ENCODE measurements at regions of chr6 and their contacts with region 1.

Region 1: GRCh38 chr6:127938701-127939100 is 37.8 kb upstream of the THEMIS start:
- DNase-seq: no peak
- H3K4me3 Mint-ChIP-seq: no peak overlapping the region
- H3K27ac Mint-ChIP-seq: peak overlapping the region; percentile 31
- H3K4me1 Mint-ChIP-seq: peaks cover 38% of the 10 kb centered on the region
- H3K27me3 Mint-ChIP-seq: no peaks in the 10 kb centered on the region

Region 2: DNA sequence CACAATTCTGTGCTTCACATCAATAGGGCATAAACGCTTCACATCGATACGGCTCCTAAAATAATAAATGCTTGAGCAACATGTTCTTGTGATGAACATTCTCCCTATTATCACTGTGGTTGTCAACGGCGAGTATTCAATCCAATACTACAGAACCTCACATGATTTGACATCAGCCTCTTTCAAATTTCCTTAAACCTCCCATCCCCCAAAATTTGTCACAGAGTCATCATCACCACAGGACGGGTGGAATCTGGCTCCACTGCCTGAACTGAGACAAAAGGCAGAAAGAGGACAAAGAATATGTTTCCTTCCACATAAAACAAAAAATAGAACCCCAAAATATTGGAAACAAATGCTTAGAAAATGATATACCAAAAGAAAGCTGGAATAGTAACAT is 45.2 kb before region 1 on chr6:
- intact Hi-C with region 1: loop called (anchors 1 kb)
- DNase-seq: no peak
- H3K4me3 Mint-ChIP-seq: peak overlapping the region; percentile 60
- H3K27ac Mint-ChIP-seq: peak overlapping the region; percentile 69
- H3K4me1 Mint-ChIP-seq: peaks cover 45% of the 10 kb centered on the region
- H3K27me3 Mint-ChIP-seq: no peaks in the 10 kb centered on the region

Region 3: DNA sequence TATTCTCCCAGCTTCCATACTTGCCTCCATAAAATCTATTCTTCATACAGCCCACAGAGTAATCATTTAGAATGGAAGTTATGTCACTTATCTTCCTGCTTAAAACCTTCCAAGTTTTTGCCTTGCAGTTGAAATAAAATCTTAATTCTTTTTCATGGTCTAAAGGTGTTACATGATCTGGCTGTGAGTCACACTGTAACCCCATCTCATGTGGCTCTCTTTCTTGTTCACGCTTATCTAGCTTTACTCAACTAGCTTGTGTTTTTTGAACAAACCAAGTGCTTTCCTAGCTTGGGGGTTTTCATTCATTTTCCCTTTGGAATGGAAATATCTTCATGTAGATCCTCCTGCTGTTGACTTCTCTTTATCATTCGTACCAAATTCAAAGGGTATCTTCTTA is 14.3 kb before region 1 on chr6:
- intact Hi-C with region 1: loop called (anchors 1 kb)
- DNase-seq: no peak
- H3K4me3 Mint-ChIP-seq: no peak overlapping the region
- H3K27ac Mint-ChIP-seq: no peak overlapping the region
- H3K4me1 Mint-ChIP-seq: peaks cover 44% of the 10 kb centered on the region
- H3K27me3 Mint-ChIP-seq: no peaks in the 10 kb centered on the region

Region 4: DNA sequence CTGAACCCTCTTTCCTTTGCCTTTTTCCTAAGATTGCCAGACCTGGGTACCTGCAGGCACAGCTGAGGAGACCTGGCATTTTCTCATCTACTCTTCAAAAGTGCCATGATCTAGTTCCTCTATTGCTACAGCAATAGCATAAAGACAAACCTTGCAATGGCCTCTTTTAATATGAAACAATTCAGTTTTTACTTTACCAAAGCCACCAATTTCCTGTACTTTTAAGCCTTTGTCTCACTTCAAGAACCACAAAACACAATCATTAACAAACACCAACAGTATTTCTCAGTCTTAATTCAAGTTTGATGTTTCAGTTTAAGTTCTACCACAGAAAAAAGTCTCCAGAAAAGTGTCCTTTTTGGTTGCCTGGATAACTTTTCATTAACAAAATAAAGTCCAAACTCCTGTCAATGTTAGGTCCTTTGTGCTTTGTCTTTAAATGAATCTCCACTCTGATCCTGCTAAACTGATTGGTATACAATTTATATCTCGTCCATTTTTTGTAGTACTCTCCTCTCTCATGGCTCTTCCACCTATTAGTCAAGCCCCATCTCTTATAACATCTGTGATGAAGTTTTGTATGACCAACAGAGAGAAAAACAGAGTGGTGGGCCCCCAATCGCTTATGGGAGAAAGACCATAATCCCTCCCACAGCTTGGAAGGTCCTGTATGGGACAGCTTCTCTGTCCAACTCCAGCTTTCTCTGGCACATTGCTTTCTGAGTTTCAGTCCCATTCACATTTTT is 12.6 kb after region 1 on chr6:
- intact Hi-C with region 1: loop called (anchors 1 kb)
- DNase-seq: no peak
- H3K4me3 Mint-ChIP-seq: peak overlapping the region; percentile 56
- H3K27ac Mint-ChIP-seq: peak overlapping the region; percentile 96
- H3K4me1 Mint-ChIP-seq: peaks cover 50% of the 10 kb centered on the region
- H3K27me3 Mint-ChIP-seq: no peaks in the 10 kb centered on the region

Measured in activated T-helper 2 cell treated with anti-CD3 and anti-CD28 coated beads, Interferon-gamma antibody, Interleukin-2, Interleukin-4, amounts not matched to agents 10 μg/mL and 5 μg/mL and 100 μg/mL, durations not matched to agents 14 hours and 24 hours and 36 hours (primary cell).